A673 (cell line): ENCODE measurements at regions of chr16 and their contacts with region 1.

Region 1: GRCh38 chr16:8173111-8173644 is 417.1 kb downstream of the TMEM114 start:
- DNase-seq: peak; percentile 82
- H3K4me3 ChIP-seq: no peak overlapping the region
- H3K27ac ChIP-seq: no peak overlapping the region
- H3K4me1 ChIP-seq: no peaks in the 10 kb centered on the region
- H3K27me3 ChIP-seq: peaks cover 2% of the 10 kb centered on the region
- CTCF ChIP-seq: peak; percentile 95

Region 2: DNA sequence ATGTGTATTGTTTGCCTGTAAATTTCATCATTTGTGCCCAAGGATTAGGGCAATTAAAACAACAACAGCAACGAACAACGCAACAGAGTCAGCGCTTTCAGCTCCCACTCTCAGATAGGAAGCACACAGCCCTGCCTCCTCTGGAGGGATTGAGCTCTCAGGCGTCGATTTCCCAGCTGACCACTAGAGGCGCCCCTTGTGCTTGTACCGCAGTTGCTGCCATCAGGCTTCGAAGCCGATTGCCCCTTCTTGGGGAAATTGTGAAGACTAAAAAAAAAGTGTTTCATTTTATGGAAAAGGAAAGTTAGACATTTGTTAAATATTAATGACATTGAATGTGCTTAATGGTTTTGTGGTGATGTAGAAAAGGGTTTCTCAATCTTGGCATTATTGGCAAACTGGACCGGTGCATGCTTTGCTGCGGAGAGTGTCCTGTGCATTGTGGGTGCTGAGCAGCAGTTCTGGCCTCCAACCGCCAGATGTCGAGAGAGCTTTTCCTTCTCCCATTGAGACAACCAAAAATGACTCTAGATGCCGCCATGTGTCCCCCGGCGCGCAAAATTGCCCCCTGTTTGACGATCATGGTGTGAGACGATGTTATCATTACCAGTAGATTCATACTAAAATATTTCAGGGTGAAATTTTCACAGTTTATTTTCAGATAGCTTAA is 1490.9 kb before region 1 on chr16:
- CTCF ChIA-PET with region 1: no interaction called
- POLR2A ChIA-PET with region 1: no interaction called
- intact Hi-C with region 1: loop called (anchors 5 kb)
- DNase-seq: peak; percentile 64
- H3K4me3 ChIP-seq: no peak overlapping the region
- H3K27ac ChIP-seq: no peak overlapping the region
- H3K4me1 ChIP-seq: no peaks in the 10 kb centered on the region
- H3K27me3 ChIP-seq: no peaks in the 10 kb centered on the region
- CTCF ChIP-seq: peak; percentile 86

Region 3: DNA sequence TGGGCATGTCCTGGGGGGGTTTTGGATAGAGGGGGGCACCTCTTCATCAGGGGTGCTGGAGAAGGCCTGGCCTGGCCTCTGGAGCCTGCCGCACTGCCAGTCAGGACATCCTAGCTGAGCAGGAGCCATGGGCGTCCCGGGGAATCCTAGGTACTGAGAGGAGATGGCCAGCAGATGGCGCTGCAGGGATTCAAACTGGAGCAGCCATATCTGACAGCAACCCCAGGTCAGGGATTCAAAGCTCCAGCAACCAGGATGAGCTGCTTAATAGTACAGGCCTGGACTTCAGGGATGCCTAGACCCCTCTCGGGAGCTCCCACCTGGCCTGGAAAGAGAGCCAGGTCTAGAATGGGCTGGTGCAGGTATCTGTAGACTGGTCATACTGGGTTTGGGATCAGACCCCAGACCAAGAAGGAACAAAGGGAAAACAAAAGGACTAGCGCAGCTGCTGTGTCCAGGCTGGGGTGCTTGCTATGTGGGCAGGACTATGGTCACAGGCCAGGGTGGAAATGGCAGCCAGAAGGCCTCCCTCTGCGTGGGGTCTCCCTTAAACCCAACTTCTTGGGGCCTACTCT is 1147.5 kb before region 1 on chr16:
- CTCF ChIA-PET with region 1: no interaction called
- POLR2A ChIA-PET with region 1: no interaction called
- intact Hi-C with region 1: loop called (anchors 5 kb)
- DNase-seq: peak; percentile 69
- H3K4me3 ChIP-seq: no peak overlapping the region
- H3K27ac ChIP-seq: no peak overlapping the region
- H3K4me1 ChIP-seq: no peaks in the 10 kb centered on the region
- H3K27me3 ChIP-seq: no peaks in the 10 kb centered on the region
- CTCF ChIP-seq: peak; percentile 72

Region 4: GRCh38 chr16:7363422-7364417 is 809.5 kb before region 1 on chr16:
- CTCF ChIA-PET with region 1: no interaction called
- POLR2A ChIA-PET with region 1: no interaction called
- intact Hi-C with region 1: no loop called
- DNase-seq: no peak
- H3K4me3 ChIP-seq: no peak overlapping the region
- H3K27ac ChIP-seq: no peak overlapping the region
- H3K4me1 ChIP-seq: no peaks in the 10 kb centered on the region
- H3K27me3 ChIP-seq: no peaks in the 10 kb centered on the region
- CTCF ChIP-seq: no peak